AG04449 (cell line): ENCODE measurements at regions of chr2 and their contacts with region 1.

Region 1: DNA sequence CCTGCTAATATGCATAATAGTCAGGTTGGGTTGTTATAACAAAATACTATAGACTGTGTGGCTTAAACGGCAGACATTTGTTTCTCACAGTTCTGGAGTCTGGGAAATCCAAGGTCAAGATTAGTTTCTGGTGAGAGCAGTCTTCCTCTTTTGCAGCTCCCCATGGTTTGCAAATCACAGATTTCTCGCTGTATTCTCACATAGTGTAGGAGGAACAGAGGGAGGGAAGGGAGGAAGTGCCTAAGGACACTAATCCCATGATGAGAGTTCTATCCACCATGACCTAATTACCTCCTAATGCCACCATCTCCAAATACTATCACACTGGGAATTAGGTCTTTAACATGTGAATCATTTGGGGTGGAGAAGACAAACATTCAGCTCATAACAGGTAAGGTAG is 20.1 kb upstream of the PTH2R start:
- DNase-seq: no peak
- H3K4me3 ChIP-seq: no peak overlapping the region
- CTCF ChIP-seq: no peak

Region 2: GRCh38 chr2:208285853-208286252 is 100.7 kb before region 1 on chr2:
- CTCF ChIA-PET with region 1: no interaction called
- POLR2A ChIA-PET with region 1: no interaction called
- DNase-seq: no peak
- H3K4me3 ChIP-seq: no peak overlapping the region
- CTCF ChIP-seq: no peak

Region 3: GRCh38 chr2:208363485-208363884 is 23.1 kb before region 1 on chr2:
- CTCF ChIA-PET with region 1: no interaction called
- POLR2A ChIA-PET with region 1: no interaction called
- DNase-seq: peak; percentile 63
- H3K4me3 ChIP-seq: no peak overlapping the region
- CTCF ChIP-seq: no peak

Region 4: GRCh38 chr2:208373460-208374089 is 13.0 kb before region 1 on chr2:
- CTCF ChIA-PET with region 1: interaction called, 17 read pairs
- POLR2A ChIA-PET with region 1: no interaction called
- DNase-seq: no peak
- H3K4me3 ChIP-seq: no peak overlapping the region
- CTCF ChIP-seq: peak; percentile 68